Right cardiac atrium (tissue), 5 donors: ENCODE measurements at regions of chr12 and their contacts with region 1.

Region 1: GRCh38 chr12:4269279-4269991 is 4.1 kb upstream of the CCND2 start:
- DNase-seq: peak; percentile 88 to 94 (median 93)
- ATAC-seq: peak; percentile 42 to 55
- H3K4me3 ChIP-seq: peak overlapping the region; percentile 75
- H3K27ac ChIP-seq: peak overlapping the region; percentile 62
- H3K4me1 ChIP-seq: peaks cover 4% of the 10 kb centered on the region
- H3K27me3 ChIP-seq: no peaks in the 10 kb centered on the region

Region 2: GRCh38 chr12:4148418-4149056 is 120.9 kb before region 1 on chr12:
- intact Hi-C with region 1: loop called in 1 of 4 experiments (anchors 10 kb)
- DNase-seq: peak; percentile 38 to 86 (median 84)
- ATAC-seq: peak; percentile 14 to 68
- H3K4me3 ChIP-seq: no peak overlapping the region
- H3K27ac ChIP-seq: no peak overlapping the region
- H3K4me1 ChIP-seq: no peaks in the 10 kb centered on the region
- H3K27me3 ChIP-seq: no peaks in the 10 kb centered on the region